SK-N-SH (cell line): ENCODE measurements at regions of chr15 and their contacts with region 1.

Region 1: DNA sequence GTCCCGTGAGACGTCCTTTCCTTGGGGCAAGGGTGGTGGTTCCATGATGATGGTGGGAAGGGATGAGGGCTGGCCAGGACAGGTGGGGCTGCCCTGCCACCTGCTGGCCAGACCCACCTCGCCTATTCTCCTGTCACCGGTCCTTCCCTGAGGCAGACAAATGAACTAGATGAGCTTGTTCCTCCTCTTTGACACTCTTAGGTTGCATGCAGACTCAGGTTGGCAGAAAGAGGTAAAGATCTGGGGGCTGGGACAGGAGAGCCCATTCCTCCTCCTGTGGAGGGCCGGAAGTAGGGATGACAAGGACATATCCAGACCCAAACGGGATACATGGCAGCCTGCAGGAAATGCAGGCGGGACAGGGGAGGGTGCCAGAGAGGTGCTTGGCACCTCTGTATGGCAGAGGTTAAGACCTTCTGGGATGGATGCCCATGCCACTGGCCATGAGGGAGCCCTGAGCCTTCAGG is 38.6 kb downstream of the ACSBG1 start:
- DNase-seq: peak; percentile 80
- H3K4me3 ChIP-seq: no peak overlapping the region
- H3K27ac ChIP-seq: no peak overlapping the region
- H3K4me1 ChIP-seq: no peaks in the 10 kb centered on the region
- H3K27me3 ChIP-seq: no peaks in the 10 kb centered on the region
- CTCF ChIP-seq: peak; percentile 62
- EP300 ChIP-seq: no peak
- RAD21 ChIP-seq: peak; percentile 72

Region 2: GRCh38 chr15:77921664-77922063 is 274.1 kb before region 1 on chr15:
- CTCF ChIA-PET with region 1: no interaction called
- POLR2A ChIA-PET with region 1: no interaction called
- DNase-seq: no peak
- H3K4me3 ChIP-seq: no peak overlapping the region
- H3K27ac ChIP-seq: no peak overlapping the region
- H3K4me1 ChIP-seq: no peaks in the 10 kb centered on the region
- H3K27me3 ChIP-seq: no peaks in the 10 kb centered on the region
- CTCF ChIP-seq: no peak
- EP300 ChIP-seq: no peak
- RAD21 ChIP-seq: no peak

Region 3: DNA sequence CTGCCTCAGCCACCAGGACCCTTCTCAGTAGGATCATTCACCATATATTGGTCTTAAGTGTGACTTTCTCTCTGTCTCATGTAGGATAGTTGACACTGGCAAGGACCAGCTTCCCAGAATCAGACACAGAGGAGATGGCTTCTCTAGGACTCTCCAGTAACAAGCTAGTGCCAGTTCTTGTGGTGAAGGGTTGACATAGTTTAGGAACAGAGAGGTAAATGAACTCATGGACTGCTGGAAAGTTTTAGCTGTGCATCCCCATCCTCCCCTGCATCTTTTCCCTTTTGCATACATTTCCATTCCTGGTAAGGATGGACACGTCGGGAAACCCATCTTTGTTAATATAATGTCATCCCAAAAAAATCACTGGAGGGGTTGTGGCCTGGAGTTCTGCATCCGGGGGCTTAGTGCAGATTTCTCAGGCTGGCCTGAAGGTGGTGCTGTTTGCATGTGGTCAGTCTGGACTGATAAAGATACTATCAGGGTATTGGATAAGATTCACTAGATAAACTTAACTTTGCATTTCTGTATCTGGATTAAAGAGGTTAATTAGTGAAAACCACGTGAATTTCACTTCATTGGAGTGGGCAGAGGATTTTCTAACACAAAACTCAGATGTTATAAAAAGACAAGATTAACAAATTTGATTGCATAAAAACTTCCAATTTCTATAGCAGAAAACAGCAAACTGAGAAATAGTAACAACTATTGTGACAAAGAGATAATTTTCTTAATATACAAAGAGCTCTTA is 229.1 kb before region 1 on chr15:
- CTCF ChIA-PET with region 1: interaction called, 12 read pairs
- POLR2A ChIA-PET with region 1: no interaction called
- DNase-seq: peak; percentile 78
- H3K4me3 ChIP-seq: no peak overlapping the region; a peak in 1 of 4 replicates
- H3K27ac ChIP-seq: no peak overlapping the region
- H3K4me1 ChIP-seq: no peaks in the 10 kb centered on the region; a peak in 1 of 4 replicates
- H3K27me3 ChIP-seq: no peaks in the 10 kb centered on the region; the same call in 1 of the 2 replicates
- CTCF ChIP-seq: peak; percentile 94
- EP300 ChIP-seq: no peak
- RAD21 ChIP-seq: peak; percentile 96

Region 4: GRCh38 chr15:78131295-78132061 is 64.3 kb before region 1 on chr15 and contains the start of gene CIB2:
- CTCF ChIA-PET with region 1: interaction called, 24 read pairs
- POLR2A ChIA-PET with region 1: no interaction called
- DNase-seq: peak; percentile 99
- H3K4me3 ChIP-seq: peak within 1 kb of the TSS; percentile 68 to 81
- H3K27ac ChIP-seq: peak within 1 kb of the TSS; percentile 48 to 74
- H3K4me1 ChIP-seq: peaks cover 0 to 7% of the 10 kb centered on the region in 2 experiments; a peak in 1 of 4 replicates
- H3K27me3 ChIP-seq: no peaks in the 10 kb centered on the region
- CTCF ChIP-seq: peak; percentile 57
- EP300 ChIP-seq: peak in 1 of 2 experiments; percentile 10; a peak in 1 of 4 replicates
- RAD21 ChIP-seq: peak; percentile 62
- polyA plus RNA-seq, gene CIB2: 39.6 and 40.8 TPM in 2 replicates

Region 5: DNA sequence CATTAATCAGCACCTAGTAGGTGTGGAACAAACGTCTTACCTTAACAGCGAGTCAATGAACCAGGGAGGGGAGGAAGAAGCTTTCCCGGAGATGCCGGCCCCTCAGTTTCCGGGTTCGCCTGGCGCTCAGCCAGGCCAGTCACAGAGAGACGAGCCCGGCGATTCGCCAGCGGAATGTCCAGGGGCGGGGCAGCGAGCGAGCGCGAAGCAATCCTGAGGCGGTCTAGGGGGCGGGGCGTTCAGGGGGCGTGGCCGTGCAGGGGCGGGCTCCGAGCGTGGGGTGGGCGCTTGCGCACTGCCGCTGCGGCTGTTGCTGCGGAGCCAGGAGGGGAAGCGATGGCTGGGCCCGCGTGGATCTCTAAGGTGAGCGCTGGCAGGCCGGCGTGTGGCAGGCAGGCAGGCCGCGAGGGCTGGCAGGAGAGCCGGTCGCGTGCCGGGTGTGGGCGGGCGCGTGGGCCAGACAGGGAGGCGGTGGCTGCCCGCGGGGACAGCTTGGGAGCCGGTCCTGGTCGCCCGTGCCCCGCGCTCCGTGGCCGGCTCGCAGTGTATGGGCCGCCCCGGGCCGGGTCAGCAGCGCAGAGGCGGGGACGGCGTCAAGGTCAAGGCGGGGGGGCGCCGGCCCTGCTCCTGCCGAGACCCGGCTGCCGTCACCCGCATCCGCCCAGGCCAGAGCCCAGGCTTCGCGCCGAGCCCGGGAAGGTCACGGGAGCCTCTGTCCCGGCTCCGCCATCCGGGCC is 46.5 kb before region 1 on chr15 and contains the start of gene IDH3A:
- CTCF ChIA-PET with region 1: interaction called, 10 read pairs
- POLR2A ChIA-PET with region 1: no interaction called
- DNase-seq: peak; percentile 100
- H3K4me3 ChIP-seq: peak within 1 kb of the TSS; percentile 61 to 77
- H3K27ac ChIP-seq: peak within 1 kb of the TSS; percentile 41 to 54
- H3K4me1 ChIP-seq: peaks cover 7 to 12% of the 10 kb centered on the region in 2 experiments
- H3K27me3 ChIP-seq: no peaks in the 10 kb centered on the region
- CTCF ChIP-seq: no peak
- EP300 ChIP-seq: peak in 1 of 2 experiments; percentile 6; a peak in 1 of 4 replicates
- RAD21 ChIP-seq: no peak
- polyA plus RNA-seq, gene IDH3A: 33.2 and 34.0 TPM in 2 replicates

Region 6: GRCh38 chr15:78177447-78177873 is 18.3 kb before region 1 on chr15:
- CTCF ChIA-PET with region 1: interaction called, 27 read pairs
- POLR2A ChIA-PET with region 1: no interaction called
- DNase-seq: peak; percentile 78
- H3K4me3 ChIP-seq: no peak overlapping the region; a peak in 1 of 4 replicates
- H3K27ac ChIP-seq: no peak overlapping the region
- H3K4me1 ChIP-seq: no peaks in the 10 kb centered on the region; a peak in 1 of 4 replicates
- H3K27me3 ChIP-seq: no peaks in the 10 kb centered on the region
- CTCF ChIP-seq: peak; percentile 84
- EP300 ChIP-seq: no peak
- RAD21 ChIP-seq: peak; percentile 75

Region 7: DNA sequence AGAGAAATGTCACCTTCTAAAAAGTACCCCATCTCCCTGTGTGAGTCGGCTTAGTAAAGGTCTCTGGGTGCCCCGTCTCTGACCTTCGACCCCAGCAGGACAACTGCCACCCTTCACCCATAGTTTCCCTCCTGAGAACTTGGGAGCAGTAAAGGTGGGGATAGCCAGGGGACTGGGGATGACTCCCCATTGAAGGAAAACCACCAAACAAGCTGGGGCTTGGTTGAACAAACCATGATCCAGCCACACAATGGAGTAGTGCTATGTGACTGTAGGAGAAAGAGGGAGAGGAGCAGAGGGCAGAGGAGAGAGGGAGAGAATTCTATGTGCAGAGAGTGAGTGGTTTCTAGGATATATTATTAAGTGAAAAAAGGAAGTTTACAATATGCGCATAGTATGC is 12.9 kb before region 1 on chr15:
- CTCF ChIA-PET with region 1: interaction called, 27 read pairs
- POLR2A ChIA-PET with region 1: interaction called, 3 read pairs
- DNase-seq: no peak
- H3K4me3 ChIP-seq: no peak overlapping the region
- H3K27ac ChIP-seq: no peak overlapping the region
- H3K4me1 ChIP-seq: no peaks in the 10 kb centered on the region
- H3K27me3 ChIP-seq: no peaks in the 10 kb centered on the region
- CTCF ChIP-seq: no peak
- EP300 ChIP-seq: no peak
- RAD21 ChIP-seq: no peak

Region 8: GRCh38 chr15:78212546-78213424 is 17.0 kb after region 1 on chr15:
- CTCF ChIA-PET with region 1: interaction called, 68 read pairs
- POLR2A ChIA-PET with region 1: no interaction called
- DNase-seq: peak; percentile 58
- H3K4me3 ChIP-seq: no peak overlapping the region; a peak in 1 of 4 replicates
- H3K27ac ChIP-seq: peak overlapping the region in 1 of 2 experiments; percentile 11; a peak in 1 of 4 replicates
- H3K4me1 ChIP-seq: peaks cover 20 to 32% of the 10 kb centered on the region in 2 experiments; a peak in 3 of 4 replicates
- H3K27me3 ChIP-seq: no peaks in the 10 kb centered on the region
- CTCF ChIP-seq: no peak
- EP300 ChIP-seq: peak in 1 of 2 experiments; percentile 79; a peak in 2 of 4 replicates
- RAD21 ChIP-seq: no peak